ENCODE measurements at regions of chr5 and their contacts with region 1.

Region 1: DNA sequence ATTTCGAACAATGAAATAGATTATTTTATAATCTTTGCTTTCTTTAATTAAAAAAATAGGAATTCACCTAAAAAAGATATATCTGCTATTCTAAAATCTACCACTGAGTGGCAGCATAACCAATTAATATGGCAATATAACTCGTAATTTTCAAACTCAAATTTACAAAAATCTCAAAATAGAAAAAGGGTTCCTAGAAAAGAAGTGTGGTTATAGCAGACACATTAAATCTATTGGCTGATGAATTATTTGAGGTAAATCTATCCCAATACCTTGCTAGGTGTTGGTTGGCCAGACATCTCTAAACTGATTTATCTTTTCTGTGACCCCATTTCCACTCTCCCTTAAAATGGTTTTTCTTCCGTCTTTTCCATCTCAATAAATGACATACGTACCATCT is 30.2 kb upstream of the NRG2 start:
- DNase-seq: peak in 2 of 5 donors; percentile 24 to 45
- H3K4me3 ChIP-seq: no peak overlapping the region
- H3K4me3 Mint-ChIP-seq: no peak overlapping the region
- H3K27ac ChIP-seq: no peak overlapping the region
- H3K27ac Mint-ChIP-seq: no peak overlapping the region
- H3K4me1 ChIP-seq: no peaks in the 10 kb centered on the region
- H3K4me1 Mint-ChIP-seq: no peaks in the 10 kb centered on the region
- H3K27me3 ChIP-seq: no peaks in the 10 kb centered on the region
- H3K27me3 Mint-ChIP-seq: peaks cover 11 to 25% of the 10 kb centered on the region in 2 donors

Region 2: DNA sequence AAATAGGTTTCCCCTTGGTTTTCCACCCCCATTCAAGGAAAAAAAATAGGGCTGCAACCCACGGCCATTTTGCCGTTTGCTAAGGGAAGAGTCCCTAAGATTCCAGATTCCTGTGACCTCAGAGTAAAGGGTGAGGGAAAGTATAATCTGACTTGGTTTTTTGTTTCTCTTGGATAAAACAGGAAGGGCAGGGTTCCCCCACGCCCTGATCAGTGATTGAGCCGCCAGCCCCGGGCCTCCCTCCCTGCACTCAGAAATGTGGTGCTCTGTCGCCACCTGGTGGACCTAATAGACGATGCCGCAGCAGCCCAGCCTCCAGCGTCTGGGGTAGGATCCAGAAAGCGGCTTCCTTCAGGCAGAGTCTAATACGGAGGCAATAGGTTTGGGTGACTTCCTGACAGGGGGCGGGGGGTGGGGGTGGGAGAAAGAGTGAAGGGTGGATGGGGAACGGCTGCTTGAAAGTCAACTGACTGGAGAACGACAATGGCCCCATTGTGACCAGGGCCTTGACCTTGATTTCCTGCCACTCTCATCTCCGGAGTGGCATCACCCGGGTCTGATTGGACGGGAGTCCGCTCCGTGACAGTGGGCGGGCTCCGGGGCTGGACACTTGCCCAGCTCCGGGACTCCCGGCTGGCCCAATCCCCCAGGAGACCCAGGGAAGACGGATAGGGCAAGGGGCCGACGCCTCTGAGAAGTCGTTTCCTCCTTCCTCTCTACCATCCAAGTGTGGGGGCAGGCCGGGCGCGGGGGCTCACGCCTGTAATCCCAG is 83.9 kb after region 1 on chr5:
- CTCF ChIA-PET with region 1: interaction called, 76 read pairs
- POLR2A ChIA-PET with region 1: no interaction called
- DNase-seq: peak; percentile 75 to 88 (median 79)
- H3K4me3 ChIP-seq: no peak overlapping the region
- H3K4me3 Mint-ChIP-seq: peak overlapping the region in 5 of 7 donors; percentile 8 to 72 (median 44)
- H3K27ac ChIP-seq: no peak overlapping the region
- H3K27ac Mint-ChIP-seq: peak overlapping the region in 3 of 8 donors; percentile 48 to 54 (median 53)
- H3K4me1 ChIP-seq: peaks cover 3% of the 10 kb centered on the region
- H3K4me1 Mint-ChIP-seq: peaks cover 3 to 10% (median 9%) of the 10 kb centered on the region in 3 donors
- H3K27me3 ChIP-seq: no peaks in the 10 kb centered on the region
- H3K27me3 Mint-ChIP-seq: no peaks in the 10 kb centered on the region

Region 3: GRCh38 chr5:140169410-140169809 is 96.1 kb after region 1 on chr5:
- CTCF ChIA-PET with region 1: no interaction called
- POLR2A ChIA-PET with region 1: no interaction called
- DNase-seq: no peak
- H3K4me3 ChIP-seq: no peak overlapping the region
- H3K4me3 Mint-ChIP-seq: no peak overlapping the region
- H3K27ac ChIP-seq: no peak overlapping the region
- H3K27ac Mint-ChIP-seq: no peak overlapping the region
- H3K4me1 ChIP-seq: peaks cover 2% of the 10 kb centered on the region
- H3K4me1 Mint-ChIP-seq: peaks cover 2 to 6% (median 4%) of the 10 kb centered on the region in 3 donors
- H3K27me3 ChIP-seq: no peaks in the 10 kb centered on the region
- H3K27me3 Mint-ChIP-seq: peaks cover 0 to 1% of the 10 kb centered on the region in 2 donors

Measured in CD8-positive, alpha-beta memory T cell (primary cell).